Activated CD4-positive, alpha-beta T cell treated with anti-CD3 and anti-CD28 coated beads, Interleukin-2, amount 10 ng/mL, durations not matched to agents 24 days and 14 days (primary cell): ENCODE measurements at regions of chr3 and their contacts with region 1.

Region 1: DNA sequence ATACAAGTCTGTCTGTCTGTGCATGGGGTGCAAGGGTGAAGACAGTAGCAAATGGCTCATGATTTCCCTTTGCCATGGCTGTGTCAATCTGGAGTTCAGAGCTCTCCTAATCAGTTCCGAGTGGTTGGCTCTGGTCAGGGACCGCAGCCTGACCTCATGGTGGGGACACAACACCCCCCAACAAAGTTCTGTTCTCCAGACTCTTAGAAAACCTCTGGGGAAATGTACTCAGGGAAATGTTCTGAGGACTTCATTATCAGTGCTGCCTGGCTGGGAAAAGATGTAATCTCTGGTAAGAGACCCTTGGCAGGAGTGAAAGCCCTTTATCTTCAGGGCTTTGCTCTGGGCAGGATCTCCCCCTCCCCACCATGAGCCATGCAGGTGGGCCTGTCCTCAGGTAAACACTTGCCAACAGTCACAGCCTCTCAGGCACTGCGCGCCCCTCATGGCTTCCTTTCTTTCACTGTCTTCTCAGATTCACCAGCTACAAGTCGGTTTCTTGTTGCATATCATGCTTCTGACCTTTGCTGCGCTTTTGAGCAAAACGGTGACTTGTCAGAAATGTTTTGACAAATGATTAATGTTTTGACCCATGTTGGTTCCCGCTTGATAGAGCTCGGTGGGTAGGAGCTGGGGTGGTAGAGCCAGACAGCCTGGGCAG is 95.5 kb downstream of the ST6GAL1 start:
- DNase-seq: peak; percentile 82
- H3K4me3 Mint-ChIP-seq: peak overlapping the region; percentile 83
- H3K27ac Mint-ChIP-seq: peak overlapping the region; percentile 98
- H3K4me1 Mint-ChIP-seq: peaks cover 52% of the 10 kb centered on the region
- H3K27me3 Mint-ChIP-seq: no peaks in the 10 kb centered on the region

Region 2: GRCh38 chr3:185937689-185938463 is 1087.9 kb before region 1 on chr3 and contains the start of gene TRA2B:
- intact Hi-C with region 1: loop called (anchors 5 kb)
- DNase-seq: peak; percentile 100
- H3K4me3 Mint-ChIP-seq: peak within 1 kb of the TSS; percentile 98
- H3K27ac Mint-ChIP-seq: peak within 1 kb of the TSS; percentile 100
- H3K4me1 Mint-ChIP-seq: peaks cover 33% of the 10 kb centered on the region
- H3K27me3 Mint-ChIP-seq: peaks cover 4% of the 10 kb centered on the region
- total RNA-seq, gene TRA2B: 311 and 314 TPM in 2 replicates

Region 3: GRCh38 chr3:186826976-186827731 is 198.6 kb before region 1 on chr3:
- intact Hi-C with region 1: loop called (anchors 1 kb)
- DNase-seq: peak; percentile 97
- H3K4me3 Mint-ChIP-seq: peak overlapping the region; percentile 98
- H3K27ac Mint-ChIP-seq: peak overlapping the region; percentile 90
- H3K4me1 Mint-ChIP-seq: peaks cover 22% of the 10 kb centered on the region
- H3K27me3 Mint-ChIP-seq: peaks cover 44% of the 10 kb centered on the region

Region 4: DNA sequence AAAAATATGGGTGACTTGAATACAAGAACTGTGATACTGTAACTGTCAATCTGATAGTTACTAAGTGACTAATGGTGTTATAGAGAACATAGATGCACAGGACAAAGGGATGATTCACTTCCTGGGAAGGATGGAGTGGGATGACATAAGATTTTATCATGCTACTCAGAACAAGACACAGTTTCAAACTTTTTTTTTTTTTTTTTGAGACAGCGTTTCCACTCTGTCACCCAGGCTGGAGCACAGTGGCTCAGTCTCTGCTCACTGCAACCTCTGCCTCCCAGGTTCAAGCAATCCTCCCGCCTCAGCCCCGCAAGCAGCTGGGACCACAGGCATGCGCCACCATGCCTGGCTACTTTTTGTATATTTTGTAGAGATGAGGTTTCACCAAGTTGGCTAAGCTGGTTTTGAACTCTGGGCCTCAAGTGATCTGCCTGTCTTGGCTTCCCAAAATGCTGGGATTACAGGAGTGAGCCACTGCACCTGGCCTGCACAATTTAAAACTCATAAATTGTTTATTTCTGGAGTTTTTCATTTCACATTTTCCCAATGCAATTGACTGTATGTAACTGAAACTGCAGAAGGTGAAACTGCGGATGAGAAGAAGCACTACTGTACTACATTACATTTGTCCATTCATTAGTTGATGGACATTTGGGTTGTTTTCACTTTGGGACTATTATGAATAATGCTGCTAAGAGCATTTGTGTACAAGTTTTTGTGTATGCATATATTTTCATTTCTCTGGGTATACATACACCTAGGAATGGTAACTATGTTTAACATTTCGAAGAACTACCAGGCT is 142.7 kb before region 1 on chr3:
- intact Hi-C with region 1: loop called (anchors 1 kb)
- DNase-seq: peak; percentile 80
- H3K4me3 Mint-ChIP-seq: peak overlapping the region; percentile 52
- H3K27ac Mint-ChIP-seq: peak overlapping the region; percentile 89
- H3K4me1 Mint-ChIP-seq: peaks cover 53% of the 10 kb centered on the region
- H3K27me3 Mint-ChIP-seq: no peaks in the 10 kb centered on the region

Region 5: DNA sequence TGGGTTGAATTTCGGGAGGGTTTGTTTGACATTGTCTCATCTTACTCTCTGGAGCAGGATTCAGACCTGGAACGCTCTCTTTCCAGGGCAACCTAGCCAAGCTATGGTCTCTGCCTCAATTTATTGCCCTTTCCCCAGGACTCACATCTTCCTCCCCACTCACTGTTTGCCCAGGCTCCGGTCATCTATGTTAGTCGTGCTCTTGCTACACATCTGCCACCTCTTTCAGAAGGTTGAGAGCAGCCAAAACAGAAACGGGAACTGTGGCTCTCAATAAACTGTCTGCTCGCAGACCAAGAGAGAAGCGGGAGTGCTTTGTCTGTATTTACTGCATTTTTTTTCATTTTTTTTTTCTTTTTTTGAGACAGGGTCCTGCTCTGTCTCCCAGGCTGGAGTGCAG is 13.9 kb before region 1 on chr3:
- intact Hi-C with region 1: loop called (anchors 1 kb)
- DNase-seq: no peak
- H3K4me3 Mint-ChIP-seq: peak overlapping the region; percentile 24
- H3K27ac Mint-ChIP-seq: peak overlapping the region; percentile 89
- H3K4me1 Mint-ChIP-seq: peaks cover 47% of the 10 kb centered on the region
- H3K27me3 Mint-ChIP-seq: no peaks in the 10 kb centered on the region

Region 6: DNA sequence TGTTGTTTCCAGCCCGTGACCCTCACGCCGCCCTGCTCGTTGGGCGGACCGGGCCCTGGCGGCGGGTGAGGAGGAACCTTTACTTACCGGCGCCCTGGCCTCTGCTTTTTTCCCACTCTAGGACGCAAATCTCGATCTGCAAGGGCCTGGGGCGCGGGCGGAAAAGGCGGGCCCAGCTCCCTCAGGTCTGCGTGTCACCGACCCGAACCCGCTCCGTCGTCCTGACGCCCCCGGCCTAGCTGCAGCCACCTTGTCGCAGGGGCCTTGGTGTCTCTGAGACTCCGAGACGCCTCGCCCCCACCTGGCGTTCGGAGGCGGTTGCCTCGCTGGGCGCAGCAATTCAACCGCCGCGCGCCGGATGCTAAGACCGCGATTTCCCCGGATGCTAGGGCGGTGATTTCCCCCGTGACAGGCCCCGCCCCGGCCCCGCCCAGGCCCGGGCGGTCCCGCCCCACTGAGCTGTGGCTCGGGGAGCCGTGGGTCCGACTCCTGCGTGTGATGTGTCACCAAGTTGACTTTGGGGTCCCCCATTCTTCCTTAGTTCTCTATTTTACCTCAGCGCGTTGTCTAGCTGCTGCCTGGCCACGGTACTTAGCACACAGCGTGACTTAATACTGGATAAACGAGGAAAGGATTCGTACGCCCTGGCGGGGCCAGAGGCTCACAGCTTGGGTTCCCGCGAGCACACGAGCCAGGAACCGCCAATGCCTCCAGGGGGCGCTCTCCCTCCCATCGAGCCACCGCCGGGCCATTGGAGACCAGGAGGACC is 113.5 kb after region 1 on chr3 and contains the start of gene RPL39L:
- intact Hi-C with region 1: loop called (anchors 5 kb)
- DNase-seq: peak; percentile 98
- H3K4me3 Mint-ChIP-seq: peak within 1 kb of the TSS; percentile 93
- H3K27ac Mint-ChIP-seq: peak within 1 kb of the TSS; percentile 98
- H3K4me1 Mint-ChIP-seq: peaks cover 27% of the 10 kb centered on the region
- H3K27me3 Mint-ChIP-seq: no peaks in the 10 kb centered on the region
- total RNA-seq, gene RPL39L: 10.4 and 11.7 TPM in 2 replicates

Region 7: DNA sequence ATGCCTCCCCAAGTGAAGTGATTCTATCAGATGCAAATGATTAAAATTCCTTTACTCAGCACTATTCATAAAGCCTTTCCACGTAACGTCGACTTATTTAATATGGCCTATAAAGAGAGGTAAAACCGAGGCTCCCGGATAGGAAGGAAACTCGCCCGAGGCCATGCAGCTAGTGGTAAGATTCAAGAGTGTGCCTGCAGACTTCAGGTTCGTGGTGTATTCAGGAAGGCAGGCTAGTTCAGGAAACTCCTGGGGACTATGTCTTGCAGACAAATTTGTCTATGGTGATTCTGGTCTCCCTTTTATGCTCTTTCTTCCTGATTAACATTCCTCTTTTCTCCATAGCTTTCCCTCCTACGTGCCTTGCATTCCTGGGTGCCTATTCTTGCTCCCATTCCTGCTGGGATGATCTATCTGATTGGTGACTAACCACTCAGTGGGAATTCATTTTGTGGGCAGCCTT is 493.7 kb after region 1 on chr3:
- intact Hi-C with region 1: no loop called
- DNase-seq: no peak
- H3K4me3 Mint-ChIP-seq: no peak overlapping the region
- H3K27ac Mint-ChIP-seq: no peak overlapping the region
- H3K4me1 Mint-ChIP-seq: no peaks in the 10 kb centered on the region
- H3K27me3 Mint-ChIP-seq: peaks cover 9% of the 10 kb centered on the region